Esophagus muscularis mucosa (tissue), 4 donors: ENCODE measurements at regions of chr21 and their contacts with region 1.

Region 1: DNA sequence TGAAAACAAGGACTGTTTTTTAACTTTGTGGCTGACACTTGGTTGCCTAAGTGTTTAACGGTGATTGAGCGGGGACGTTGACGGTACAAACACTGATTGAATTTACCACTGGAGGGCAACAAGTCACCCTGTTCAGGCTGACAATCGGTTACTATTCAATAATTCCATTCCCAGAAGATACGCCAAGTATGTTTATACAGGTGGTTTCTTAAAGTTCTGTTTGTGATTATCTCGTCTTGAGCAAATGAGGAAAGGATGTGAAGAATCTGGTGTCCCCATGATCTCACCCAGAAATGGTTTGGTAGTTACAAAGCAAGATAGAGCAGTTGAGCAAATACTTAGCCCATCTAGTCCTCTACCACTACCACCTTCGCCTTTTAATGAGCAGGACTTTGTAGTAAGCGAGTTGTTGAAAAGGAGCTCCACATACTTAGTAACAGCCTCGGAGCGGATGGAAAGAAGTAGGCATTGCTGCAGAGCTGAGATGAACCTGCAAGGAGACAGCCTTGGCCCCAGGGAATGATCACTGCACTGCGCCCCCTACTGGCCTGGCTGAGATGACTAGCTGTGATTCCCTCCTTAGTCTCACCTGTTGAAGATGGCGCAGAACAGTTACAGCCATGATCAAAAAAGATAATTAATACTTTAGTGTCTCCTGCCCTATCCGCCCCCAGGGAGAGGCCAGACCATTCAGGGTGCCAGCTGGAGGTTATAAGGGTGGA is 36.3 kb downstream of the IFNAR1 start:
- DNase-seq: peak; percentile 94
- H3K4me3 ChIP-seq: peak overlapping the region in 3 of 4 donors; percentile 9 to 26 (median 24)
- H3K27ac ChIP-seq: peak overlapping the region; percentile 7 to 47 (median 36)
- H3K4me1 ChIP-seq: peaks cover 17 to 25% (median 22%) of the 10 kb centered on the region in 4 donors
- H3K27me3 ChIP-seq: no peaks in the 10 kb centered on the region
- CTCF ChIP-seq: peak; percentile 72 to 79 (median 77)
- EP300 ChIP-seq: no peak
- POLR2A ChIP-seq: no peak

Region 2: DNA sequence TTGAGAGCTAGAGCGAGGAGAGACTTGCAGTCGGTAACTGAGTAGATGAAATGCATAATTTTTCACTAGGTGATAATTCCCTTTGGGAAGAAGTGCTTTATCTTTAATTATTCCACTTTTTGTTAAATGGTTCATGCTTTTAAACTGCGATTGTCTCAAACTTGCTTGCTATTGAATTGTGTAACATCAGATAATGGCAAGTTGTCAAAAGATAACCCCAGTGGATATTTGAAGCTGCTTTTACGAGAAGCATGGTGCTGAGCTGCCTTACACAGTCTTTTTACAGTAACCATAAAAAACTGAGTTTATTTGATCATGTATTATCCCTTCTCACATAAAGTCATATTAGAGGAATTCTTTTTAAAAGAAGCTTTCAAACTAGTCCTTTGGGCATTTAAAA is 88.6 kb after region 1 on chr21:
- intact Hi-C with region 1: loop called (anchors 5 kb)
- DNase-seq: no peak
- H3K4me3 ChIP-seq: no peak overlapping the region
- H3K27ac ChIP-seq: no peak overlapping the region
- H3K4me1 ChIP-seq: peaks cover 0 to 9% (median 6%) of the 10 kb centered on the region in 4 donors
- H3K27me3 ChIP-seq: no peaks in the 10 kb centered on the region
- CTCF ChIP-seq: no peak
- EP300 ChIP-seq: no peak
- POLR2A ChIP-seq: no peak